Naive thymus-derived CD4-positive, alpha-beta T cell (primary cell): ENCODE measurements at regions of chr12 and their contacts with region 1.

Region 1: DNA sequence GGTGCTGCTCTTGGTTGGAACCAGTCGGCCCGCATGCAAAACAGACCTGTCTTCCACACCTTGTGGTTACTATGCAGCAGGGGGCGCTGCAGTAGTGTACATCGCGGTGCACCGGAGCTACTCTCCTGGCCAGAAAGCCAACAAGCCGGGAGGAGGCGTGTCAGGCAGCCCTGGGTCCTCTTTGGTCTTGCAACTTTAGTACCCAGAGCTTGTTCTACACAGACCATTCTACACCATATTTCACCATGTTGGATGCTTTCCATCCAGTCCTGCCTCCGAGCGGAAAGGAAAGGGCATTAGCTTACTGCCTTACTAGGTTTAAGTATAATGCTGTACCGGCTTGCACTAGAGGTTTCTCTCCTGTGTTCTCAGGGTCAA is 927 bp upstream of the TMTC2 start:
- DNase-seq: peak; percentile 71 to 88 (median 82)
- ATAC-seq: peak; percentile 76
- H3K4me3 ChIP-seq: peak overlapping the region; percentile 85
- H3K4me3 Mint-ChIP-seq: peak overlapping the region; percentile 90 to 99 (median 96)
- H3K27ac ChIP-seq: peak overlapping the region; percentile 81
- H3K27ac Mint-ChIP-seq: peak overlapping the region; percentile 80 to 96 (median 94)
- H3K4me1 ChIP-seq: no peaks in the 10 kb centered on the region
- H3K4me1 Mint-ChIP-seq: peaks cover 9 to 17% (median 12%) of the 10 kb centered on the region in 7 donors
- H3K27me3 ChIP-seq: no peaks in the 10 kb centered on the region
- H3K27me3 Mint-ChIP-seq: peaks cover 0 to 20% (median 12%) of the 10 kb centered on the region in 5 donors

Region 2: DNA sequence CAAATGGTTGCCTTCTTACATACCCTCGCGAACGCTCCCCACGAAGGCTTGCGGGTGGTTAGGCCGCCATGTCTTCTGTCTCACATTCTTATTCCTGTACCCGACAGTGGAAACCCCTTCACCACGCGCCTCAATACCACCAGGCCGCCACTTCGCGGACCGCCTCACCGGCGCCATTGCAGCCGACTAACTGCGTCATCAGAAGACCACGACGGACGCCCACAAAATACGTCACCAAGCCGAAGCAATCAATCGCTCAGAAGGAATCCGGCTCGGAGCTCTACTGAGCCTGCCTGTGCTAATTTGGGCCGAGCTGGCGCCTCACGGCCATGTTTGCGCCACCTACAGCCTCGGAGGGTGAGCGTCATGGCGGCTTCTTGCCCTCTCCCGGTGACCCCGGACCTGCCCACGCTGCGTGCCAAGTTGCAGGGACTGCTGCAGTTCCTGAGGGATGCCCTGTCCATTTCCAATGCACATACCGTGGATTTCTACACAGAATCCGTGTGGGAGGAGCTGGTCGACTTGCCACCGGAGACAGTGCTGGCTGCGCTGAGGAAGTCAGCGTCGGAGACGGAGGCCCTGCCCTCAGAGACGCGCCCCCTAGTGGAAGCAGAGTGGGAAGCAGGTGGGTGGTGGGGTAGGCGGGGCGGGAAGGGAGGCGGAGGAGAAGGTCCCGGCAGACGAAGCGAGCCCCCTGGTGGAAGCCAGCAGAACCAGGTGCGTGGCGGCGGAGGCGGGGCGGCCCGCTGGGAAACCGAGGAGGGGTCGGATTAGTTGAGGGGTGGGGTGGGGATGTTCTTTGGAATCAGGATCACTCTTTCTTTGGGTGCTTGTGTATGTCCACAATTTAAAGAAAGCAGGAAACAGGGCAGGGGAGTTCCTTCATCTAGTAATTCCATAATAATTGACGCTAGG is 327.3 kb before region 1 on chr12 and contains the starts of genes CCDC59 and METTL25:
- CTCF ChIA-PET with region 1: interaction called, 7 read pairs
- POLR2A ChIA-PET with region 1: interaction called, 7 read pairs
- intact Hi-C with region 1: loop called (anchors 1 kb)
- DNase-seq: peak; percentile 95 to 100 (median 98)
- ATAC-seq: peak; percentile 94
- H3K4me3 ChIP-seq: peak within 1 kb of the TSS; percentile 93
- H3K4me3 Mint-ChIP-seq: peak within 1 kb of the TSS; percentile 92 to 100 (median 98)
- H3K27ac ChIP-seq: peak within 1 kb of the TSS; percentile 95
- H3K27ac Mint-ChIP-seq: peak within 1 kb of the TSS; percentile 99 to 100 (median 100)
- H3K4me1 ChIP-seq: peaks cover 27 to 31% of the 10 kb centered on the region in 2 donors
- H3K4me1 Mint-ChIP-seq: peaks cover 24 to 80% (median 69%) of the 10 kb centered on the region in 7 donors
- H3K27me3 ChIP-seq: no peaks in the 10 kb centered on the region
- H3K27me3 Mint-ChIP-seq: peaks cover 0 to 4% (median 0%) of the 10 kb centered on the region in 5 donors
- total RNA-seq, gene CCDC59: 44.9 to 150 (median 70.8) TPM
- total RNA-seq, gene METTL25: 8.6 to 27.5 (median 14.5) TPM

Region 3: DNA sequence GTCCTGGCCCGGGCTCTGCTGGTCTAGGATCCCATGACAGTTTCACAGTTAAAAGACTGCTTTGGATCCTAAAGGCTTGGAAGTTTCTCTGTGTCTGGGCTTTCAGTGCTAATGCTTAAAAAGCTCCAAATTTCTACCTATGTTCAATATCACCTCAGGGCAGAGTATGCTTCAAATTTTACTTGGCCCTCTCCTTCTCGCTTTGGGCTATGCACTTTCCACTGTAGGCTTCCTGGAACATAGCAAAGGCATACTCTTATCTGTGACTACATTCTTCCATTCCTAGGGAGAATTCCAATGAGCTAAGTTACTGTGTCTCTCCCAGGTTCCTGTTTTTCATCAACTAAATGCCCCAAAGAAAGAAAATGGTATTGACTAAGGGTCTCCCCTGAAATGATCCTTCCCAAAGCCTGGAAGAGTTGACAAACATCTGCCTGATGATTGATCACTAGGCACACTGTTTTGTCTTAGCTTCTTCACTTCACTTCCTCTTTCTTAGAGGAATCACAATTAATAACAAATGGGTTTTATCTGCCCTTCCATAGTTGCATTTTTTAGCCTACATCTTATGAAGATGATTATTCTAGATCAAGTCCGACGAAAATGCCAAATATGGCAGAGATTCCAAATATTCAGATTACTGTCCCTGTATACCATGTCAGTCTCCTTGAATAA is 80.4 kb after region 1 on chr12:
- CTCF ChIA-PET with region 1: no interaction called
- POLR2A ChIA-PET with region 1: no interaction called
- intact Hi-C with region 1: no loop called
- DNase-seq: no peak
- ATAC-seq: no peak
- H3K4me3 ChIP-seq: no peak overlapping the region
- H3K4me3 Mint-ChIP-seq: no peak overlapping the region
- H3K27ac ChIP-seq: no peak overlapping the region
- H3K27ac Mint-ChIP-seq: no peak overlapping the region
- H3K4me1 ChIP-seq: no peaks in the 10 kb centered on the region
- H3K4me1 Mint-ChIP-seq: no peaks in the 10 kb centered on the region
- H3K27me3 ChIP-seq: no peaks in the 10 kb centered on the region
- H3K27me3 Mint-ChIP-seq: no peaks in the 10 kb centered on the region

Region 4: GRCh38 chr12:82781309-82781997 is 95.7 kb after region 1 on chr12:
- CTCF ChIA-PET with region 1: no interaction called
- POLR2A ChIA-PET with region 1: no interaction called
- intact Hi-C with region 1: no loop called
- DNase-seq: no peak
- ATAC-seq: no peak
- H3K4me3 ChIP-seq: no peak overlapping the region
- H3K4me3 Mint-ChIP-seq: no peak overlapping the region
- H3K27ac ChIP-seq: no peak overlapping the region
- H3K27ac Mint-ChIP-seq: no peak overlapping the region
- H3K4me1 ChIP-seq: no peaks in the 10 kb centered on the region
- H3K4me1 Mint-ChIP-seq: peaks cover 0 to 1% (median 0%) of the 10 kb centered on the region in 7 donors
- H3K27me3 ChIP-seq: no peaks in the 10 kb centered on the region
- H3K27me3 Mint-ChIP-seq: peaks cover 0 to 4% (median 0%) of the 10 kb centered on the region in 5 donors

Region 5: DNA sequence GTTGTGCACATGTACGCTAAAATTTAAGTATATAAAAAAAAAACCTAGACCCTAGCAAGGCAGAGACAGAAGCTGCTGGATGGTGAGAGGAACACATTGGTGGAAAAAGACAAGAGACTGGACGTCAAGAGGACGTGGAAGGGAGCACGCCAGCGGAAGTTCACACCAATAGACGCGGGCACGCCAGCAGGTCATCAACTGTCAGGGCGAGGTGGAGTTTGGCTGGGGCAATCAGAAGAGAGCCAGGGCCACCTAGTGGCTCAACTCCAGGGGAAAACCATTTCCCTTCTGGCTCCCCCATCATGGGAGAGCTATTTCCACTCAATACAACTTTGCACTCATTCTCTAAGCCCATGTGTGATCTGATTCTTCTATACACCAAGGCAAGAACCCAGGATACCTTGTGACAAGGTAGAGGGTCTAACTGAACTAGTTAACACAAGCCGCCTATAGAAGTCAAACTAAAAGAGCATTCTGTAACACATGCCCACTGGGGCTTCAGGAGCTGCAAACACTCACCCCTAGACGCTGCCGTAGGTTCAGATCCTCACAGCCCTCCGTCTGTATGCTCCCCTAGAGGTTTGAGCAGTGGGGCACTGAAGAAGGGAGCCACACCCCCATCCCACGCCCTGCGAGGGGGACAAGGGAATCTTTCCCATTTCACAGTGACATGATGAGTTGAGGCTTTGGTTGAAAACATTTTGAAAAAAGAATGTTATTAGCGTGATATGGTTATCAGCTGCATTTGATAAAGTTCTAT is 703.6 kb after region 1 on chr12:
- CTCF ChIA-PET with region 1: no interaction called
- POLR2A ChIA-PET with region 1: no interaction called
- intact Hi-C with region 1: loop called (anchors 2 to 10 kb)
- DNase-seq: no peak
- ATAC-seq: no peak
- H3K4me3 ChIP-seq: no peak overlapping the region
- H3K4me3 Mint-ChIP-seq: no peak overlapping the region
- H3K27ac ChIP-seq: no peak overlapping the region
- H3K27ac Mint-ChIP-seq: no peak overlapping the region
- H3K4me1 ChIP-seq: no peaks in the 10 kb centered on the region
- H3K4me1 Mint-ChIP-seq: peaks cover 0 to 1% (median 0%) of the 10 kb centered on the region in 7 donors
- H3K27me3 ChIP-seq: no peaks in the 10 kb centered on the region
- H3K27me3 Mint-ChIP-seq: no peaks in the 10 kb centered on the region

Region 6: DNA sequence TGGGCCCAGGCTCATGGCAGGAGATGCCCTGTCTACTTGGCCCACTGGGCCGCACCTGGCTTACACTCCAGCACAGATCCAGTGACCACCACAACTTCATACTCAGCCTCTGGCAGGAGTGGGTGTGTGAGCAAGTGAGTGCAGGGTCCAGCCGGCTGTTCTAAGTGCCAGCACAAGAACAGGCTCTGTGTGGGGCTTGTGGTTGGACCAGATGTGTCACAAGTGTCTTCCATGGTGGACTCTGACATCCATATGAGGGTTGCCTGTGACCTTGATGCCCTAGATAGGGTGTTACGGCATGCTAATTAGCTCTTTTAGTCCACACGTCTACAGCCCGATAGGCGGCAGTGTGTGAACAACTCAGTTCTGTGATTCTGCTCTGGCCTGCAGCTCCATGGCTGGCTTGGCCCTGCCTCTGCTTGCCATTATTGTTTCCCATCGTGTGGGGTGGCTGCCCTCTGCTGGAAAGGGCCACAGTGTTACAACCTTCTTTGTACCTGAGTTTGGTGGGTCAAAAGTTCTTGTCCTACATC is 1137.7 kb after region 1 on chr12:
- CTCF ChIA-PET with region 1: interaction called, 5 read pairs
- POLR2A ChIA-PET with region 1: no interaction called
- intact Hi-C with region 1: loop called in 1 of 2 experiments (anchors 1 kb)
- DNase-seq: peak in 2 of 9 donors; percentile 2
- ATAC-seq: peak; percentile 70
- H3K4me3 ChIP-seq: no peak overlapping the region
- H3K4me3 Mint-ChIP-seq: no peak overlapping the region
- H3K27ac ChIP-seq: no peak overlapping the region
- H3K27ac Mint-ChIP-seq: no peak overlapping the region
- H3K4me1 ChIP-seq: no peaks in the 10 kb centered on the region
- H3K4me1 Mint-ChIP-seq: no peaks in the 10 kb centered on the region
- H3K27me3 ChIP-seq: no peaks in the 10 kb centered on the region
- H3K27me3 Mint-ChIP-seq: peaks cover 0 to 4% (median 0%) of the 10 kb centered on the region in 5 donors

Region 7: DNA sequence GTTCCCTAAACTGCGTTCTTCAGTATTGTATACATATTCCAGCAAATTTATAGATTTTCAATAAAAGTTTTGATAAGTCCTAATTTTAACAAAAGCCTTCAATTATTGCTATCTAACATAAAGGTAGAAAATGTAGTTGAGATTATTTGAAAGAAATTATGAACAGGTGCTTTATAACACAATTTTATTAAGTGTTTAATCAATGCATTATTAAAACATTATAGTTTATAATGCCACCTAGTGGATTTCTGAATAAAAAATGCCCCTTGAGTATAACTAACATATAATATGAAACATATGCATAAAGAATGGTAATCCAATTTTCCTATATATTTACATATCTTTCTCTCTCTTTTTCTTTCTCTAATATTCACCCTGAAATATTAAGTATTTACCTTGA is 1711.5 kb after region 1 on chr12:
- CTCF ChIA-PET with region 1: no interaction called
- POLR2A ChIA-PET with region 1: no interaction called
- intact Hi-C with region 1: loop called in 1 of 2 experiments (anchors 1 kb)
- DNase-seq: no peak
- ATAC-seq: no peak
- H3K4me3 ChIP-seq: no peak overlapping the region
- H3K4me3 Mint-ChIP-seq: no peak overlapping the region
- H3K27ac ChIP-seq: no peak overlapping the region
- H3K27ac Mint-ChIP-seq: no peak overlapping the region
- H3K4me1 ChIP-seq: no peaks in the 10 kb centered on the region
- H3K4me1 Mint-ChIP-seq: no peaks in the 10 kb centered on the region
- H3K27me3 ChIP-seq: no peaks in the 10 kb centered on the region
- H3K27me3 Mint-ChIP-seq: peaks cover 0 to 3% (median 0%) of the 10 kb centered on the region in 5 donors